Right ventricle myocardium inferior (tissue), 1 donor: ENCODE measurements at regions of chr11 and their contacts with region 1.

Region 1: DNA sequence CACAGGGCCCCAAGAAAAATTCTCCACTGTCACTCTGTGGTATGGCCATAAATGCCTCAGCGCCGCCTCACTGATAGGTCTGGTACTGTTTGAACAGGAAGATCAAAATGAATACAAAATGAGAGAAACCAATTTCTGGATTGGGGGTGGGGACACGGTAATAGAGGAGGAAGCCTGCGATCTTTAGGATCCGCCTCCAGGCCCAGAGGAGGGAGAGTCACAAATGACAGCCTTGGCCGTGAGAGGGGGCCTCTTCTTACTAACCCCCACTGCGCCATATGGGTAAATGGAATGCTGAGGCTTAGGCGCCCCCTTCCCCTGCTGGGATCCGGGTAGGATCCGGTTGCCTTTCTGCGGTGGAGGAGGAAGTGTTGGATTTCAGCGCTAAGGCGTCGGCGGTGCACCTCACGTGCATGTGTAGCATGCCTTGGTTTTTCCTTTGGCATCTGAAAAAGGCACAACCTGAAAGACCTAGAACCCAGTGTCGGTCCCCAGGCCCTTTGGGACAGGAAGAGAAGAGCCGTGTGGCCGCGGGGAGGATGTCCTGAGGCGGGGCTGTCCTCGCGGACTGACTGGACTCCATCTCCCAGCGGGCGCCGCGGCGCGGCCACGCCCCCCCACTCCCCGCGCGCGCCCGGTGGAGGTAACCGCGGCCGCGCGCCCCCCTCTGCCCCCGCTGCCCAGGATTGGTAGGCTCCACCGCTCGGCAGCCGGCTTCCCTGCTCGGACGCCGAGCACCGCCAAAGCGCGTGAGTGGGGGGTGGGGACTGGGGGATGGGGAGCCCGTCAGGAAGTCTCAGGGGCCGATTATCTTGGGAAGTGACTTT is 718 bp upstream of the MADD start:
- DNase-seq: peak; percentile 95
- ATAC-seq: peak; percentile 91

Region 2: DNA sequence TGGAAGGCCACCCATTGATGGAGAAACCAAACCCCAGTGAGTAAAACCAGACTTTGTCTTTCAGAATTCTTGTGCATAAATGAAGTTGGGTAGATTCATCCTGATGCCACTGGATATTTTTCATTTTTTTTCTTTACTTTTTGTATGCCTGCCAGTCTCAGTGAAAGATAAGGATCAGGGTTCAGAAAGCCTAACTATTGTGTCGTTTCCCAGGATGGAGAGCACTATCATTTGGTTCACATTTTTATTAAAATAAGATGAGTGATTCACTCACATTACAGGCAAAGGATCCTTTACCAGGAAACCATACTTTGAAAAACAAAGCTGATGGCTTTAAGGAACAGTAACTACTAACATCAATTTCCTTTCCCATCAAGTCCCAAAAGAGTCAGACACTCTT is 144.5 kb before region 1 on chr11:
- intact Hi-C with region 1: no loop called
- DNase-seq: no peak
- ATAC-seq: no peak

Region 3: DNA sequence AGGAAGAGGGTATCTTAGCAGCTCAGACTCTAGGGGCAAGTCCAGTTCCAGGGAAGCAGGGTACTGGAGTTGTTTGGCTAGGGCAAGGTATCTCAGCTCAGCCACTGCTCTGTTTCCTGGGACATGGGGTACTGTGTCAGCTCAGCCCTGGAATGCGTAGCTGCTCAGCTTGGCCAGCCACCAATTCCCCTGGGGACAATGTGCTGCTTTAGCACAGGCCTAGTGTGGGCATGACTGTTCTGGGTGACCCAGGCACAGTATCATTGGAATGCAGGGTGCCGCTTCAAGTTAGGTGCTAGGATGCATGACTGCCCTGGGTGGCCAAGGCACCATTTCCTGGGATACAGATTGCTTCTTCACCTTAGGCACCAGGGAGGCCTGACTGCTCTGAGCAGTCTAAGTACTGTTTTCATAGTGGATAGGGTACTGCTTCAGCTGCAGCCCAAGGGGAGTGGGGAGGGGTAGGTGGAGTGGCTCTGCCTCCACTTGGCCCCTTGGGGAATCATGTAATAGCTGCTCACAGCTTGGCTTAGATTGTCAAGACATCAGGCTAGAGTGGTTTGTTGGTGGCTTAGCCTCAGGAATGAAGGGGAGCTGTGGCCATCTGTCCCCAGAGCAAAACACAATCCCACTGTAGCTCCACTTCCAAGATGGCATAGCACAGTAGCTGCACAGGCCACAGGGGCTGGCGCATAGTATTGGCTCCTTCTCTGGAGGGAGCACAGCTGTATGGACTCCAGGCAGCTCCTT is 36.7 kb after region 1 on chr11:
- intact Hi-C with region 1: loop called (anchors 5 kb)
- DNase-seq: no peak
- ATAC-seq: peak; percentile 98

Region 4: GRCh38 chr11:47499614-47500013 is 230.4 kb after region 1 on chr11:
- intact Hi-C with region 1: no loop called
- DNase-seq: no peak
- ATAC-seq: peak; percentile 68